ENCODE measurements at regions of chr10 and their contacts with region 1.

Region 1: DNA sequence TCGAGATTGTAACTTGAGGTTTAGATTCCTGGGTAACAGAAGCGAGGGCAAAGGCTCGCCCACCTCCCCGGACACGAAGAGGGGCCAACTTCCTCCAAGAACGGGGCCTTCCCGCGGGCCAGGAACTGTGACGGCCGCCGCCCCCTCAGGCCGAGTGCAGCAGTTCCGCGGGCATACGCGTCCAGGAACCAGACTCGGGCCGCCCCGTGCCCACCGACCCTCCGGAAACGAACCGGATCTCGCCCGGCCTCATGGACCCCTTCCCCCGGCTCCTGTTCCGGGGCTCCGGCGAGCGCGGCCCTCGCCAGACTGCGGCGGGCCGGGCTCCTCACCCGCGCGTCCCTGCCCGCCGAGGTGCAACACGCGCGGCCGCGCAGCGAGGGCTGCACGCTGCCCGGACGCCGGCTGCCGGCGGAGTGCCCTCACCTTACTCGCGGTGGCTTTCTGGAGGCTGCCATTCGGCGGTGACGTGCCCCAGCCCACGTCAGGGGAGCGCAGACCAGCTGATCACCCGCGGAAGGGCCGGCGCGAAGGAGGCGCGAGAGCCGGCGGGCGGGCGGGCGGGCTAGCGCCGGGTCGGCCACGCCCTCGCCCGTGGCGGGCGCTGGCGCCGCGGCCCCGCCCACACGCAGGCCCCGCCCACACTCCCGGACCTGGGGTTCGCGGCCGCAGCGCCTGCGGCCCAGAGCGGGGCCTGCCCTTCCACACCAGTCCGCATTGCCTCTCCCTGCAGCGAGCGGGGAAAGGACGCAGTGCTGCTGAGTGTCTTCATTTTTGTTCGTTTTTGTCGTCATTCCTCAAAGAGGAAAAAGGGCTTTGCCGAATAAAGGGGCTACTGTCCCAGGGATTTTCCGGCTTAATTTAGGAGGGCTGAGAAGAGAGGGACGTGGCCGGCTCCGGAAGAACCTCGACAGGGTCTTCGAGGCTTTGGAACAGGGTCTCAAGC is at the start of gene XPNPEP1:
- DNase-seq: peak; percentile 91
- ATAC-seq: peak; percentile 94
- H3K4me3 Mint-ChIP-seq: peak within 1 kb of the TSS; percentile 93
- H3K27ac Mint-ChIP-seq: peak within 1 kb of the TSS; percentile 87
- H3K4me1 Mint-ChIP-seq: peaks cover 45% of the 10 kb centered on the region
- H3K27me3 Mint-ChIP-seq: peaks cover 2% of the 10 kb centered on the region
- total RNA-seq, gene XPNPEP1: 92.9 to 99.4 TPM

Region 2: GRCh38 chr10:109934958-109935706 is 11.9 kb after region 1 on chr10:
- POLR2A ChIA-PET with region 1: interaction called, 14 read pairs
- DNase-seq: peak; percentile 47
- ATAC-seq: peak; percentile 51
- H3K4me3 Mint-ChIP-seq: peak overlapping the region; percentile 82
- H3K27ac Mint-ChIP-seq: peak overlapping the region; percentile 96
- H3K4me1 Mint-ChIP-seq: peaks cover 24% of the 10 kb centered on the region
- H3K27me3 Mint-ChIP-seq: no peaks in the 10 kb centered on the region

Measured in activated naive CD8-positive, alpha-beta T cell treated with anti-CD3 and anti-CD28 coated beads, Interleukin-2, amount 10 ng/mL, durations not matched to agents 7 days and 5 days (primary cell).